ENCODE measurements at regions of chr15 and their contacts with region 1.

Region 1: GRCh38 chr15:57340682-57341259 is 35.5 kb upstream of the CGNL1 start:
- DNase-seq: peak; percentile 73
- ATAC-seq: peak; percentile 71

Region 2: DNA sequence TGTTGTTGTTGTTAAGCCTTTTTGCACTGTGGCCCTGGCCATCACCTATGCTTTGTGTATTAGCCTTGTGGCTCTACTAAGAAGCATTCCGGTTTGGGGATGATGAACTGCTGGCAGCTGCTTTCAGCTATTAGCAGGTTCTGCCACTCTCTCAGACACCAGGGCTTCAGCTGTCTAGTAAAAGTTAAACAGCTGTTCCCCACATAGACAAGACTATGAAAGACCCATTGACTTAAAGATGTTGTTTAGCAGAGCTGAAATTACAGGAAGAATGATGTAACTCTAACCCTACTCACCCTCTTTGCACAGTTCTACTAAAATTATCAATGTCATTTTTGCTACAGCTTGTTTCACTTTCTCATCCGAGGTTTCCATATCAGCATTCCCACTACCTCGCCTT is 95.6 kb before region 1 on chr15:
- intact Hi-C with region 1: no loop called
- DNase-seq: no peak
- ATAC-seq: peak; percentile 82

Region 3: DNA sequence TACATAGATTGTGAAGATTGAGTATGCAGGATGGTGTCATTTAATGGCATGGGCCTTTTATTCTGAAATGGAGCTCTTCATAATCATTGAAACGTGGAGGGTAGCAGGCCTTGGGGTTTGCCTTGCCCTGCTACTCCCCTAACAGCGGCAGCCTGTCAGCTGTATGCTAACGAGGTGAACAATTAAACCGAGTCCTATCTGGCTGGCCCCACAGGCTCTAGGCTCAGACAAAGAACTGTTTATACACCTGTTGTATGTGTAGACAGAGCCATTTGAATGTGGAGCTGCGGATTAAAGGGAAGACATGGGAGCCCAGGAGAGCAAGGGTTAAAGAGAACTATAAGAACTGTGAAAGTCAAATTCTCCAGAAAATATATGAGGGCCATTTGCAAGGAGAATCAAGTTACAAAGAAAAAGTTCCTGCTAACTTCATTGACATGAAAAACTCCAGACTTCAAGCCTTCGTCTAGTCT is 81.2 kb before region 1 on chr15:
- intact Hi-C with region 1: no loop called
- DNase-seq: no peak
- ATAC-seq: no peak

Region 4: GRCh38 chr15:57527382-57528091 is 186.8 kb after region 1 on chr15:
- intact Hi-C with region 1: loop called (anchors 5 kb)
- DNase-seq: no peak
- ATAC-seq: peak; percentile 89

Measured in sciatic nerve (tissue), 2 donors.